Activated T-helper 1 cell treated with anti-CD3 and anti-CD28 coated beads, Interleukin-12 subunit alpha, Interleukin-12 subunit beta, Interleukin-2, Interleukin-4 antibody, amounts not matched to agents 30 ng/mL and 10 ng/mL and 1 ng/mL, durations not matched to agents 14 hours and 24 hours and 36 hours (primary cell): ENCODE measurements at regions of chr11 and their contacts with region 1.

Region 1: GRCh38 chr11:75689863-75690609 is 21.2 kb upstream of the MAP6 start:
- DNase-seq: no peak
- H3K4me3 Mint-ChIP-seq: no peak overlapping the region
- H3K27ac Mint-ChIP-seq: peak overlapping the region; percentile 9
- H3K4me1 Mint-ChIP-seq: peaks cover 16% of the 10 kb centered on the region
- H3K27me3 Mint-ChIP-seq: peaks cover 29% of the 10 kb centered on the region

Region 2: DNA sequence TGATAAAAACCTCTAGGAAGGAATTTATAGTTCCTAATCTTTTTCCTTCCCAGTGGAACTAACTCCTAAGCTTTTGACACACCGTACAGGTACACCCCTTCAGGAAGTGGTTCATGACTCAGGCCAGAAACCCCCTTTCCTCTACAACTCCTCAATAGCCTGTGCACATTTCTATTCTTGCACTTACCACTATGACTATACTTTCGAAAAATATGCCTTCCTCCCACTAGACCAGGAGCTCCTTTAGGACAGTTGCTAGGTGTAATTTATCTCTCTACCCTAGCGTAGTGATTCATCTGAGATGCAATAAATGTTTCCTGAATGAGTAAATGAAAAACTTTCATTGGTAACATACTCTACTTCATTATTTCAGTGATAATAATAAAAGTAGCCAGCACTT is 35.7 kb before region 1 on chr11:
- intact Hi-C with region 1: loop called (anchors 1 kb)
- DNase-seq: no peak
- H3K4me3 Mint-ChIP-seq: no peak overlapping the region
- H3K27ac Mint-ChIP-seq: no peak overlapping the region
- H3K4me1 Mint-ChIP-seq: peaks cover 15% of the 10 kb centered on the region
- H3K27me3 Mint-ChIP-seq: peaks cover 24% of the 10 kb centered on the region

Region 3: GRCh38 chr11:75673977-75674582 is 16.0 kb before region 1 on chr11:
- intact Hi-C with region 1: loop called (anchors 1 kb)
- DNase-seq: peak; percentile 47
- H3K4me3 Mint-ChIP-seq: no peak overlapping the region
- H3K27ac Mint-ChIP-seq: no peak overlapping the region
- H3K4me1 Mint-ChIP-seq: peaks cover 42% of the 10 kb centered on the region
- H3K27me3 Mint-ChIP-seq: peaks cover 33% of the 10 kb centered on the region

Region 4: DNA sequence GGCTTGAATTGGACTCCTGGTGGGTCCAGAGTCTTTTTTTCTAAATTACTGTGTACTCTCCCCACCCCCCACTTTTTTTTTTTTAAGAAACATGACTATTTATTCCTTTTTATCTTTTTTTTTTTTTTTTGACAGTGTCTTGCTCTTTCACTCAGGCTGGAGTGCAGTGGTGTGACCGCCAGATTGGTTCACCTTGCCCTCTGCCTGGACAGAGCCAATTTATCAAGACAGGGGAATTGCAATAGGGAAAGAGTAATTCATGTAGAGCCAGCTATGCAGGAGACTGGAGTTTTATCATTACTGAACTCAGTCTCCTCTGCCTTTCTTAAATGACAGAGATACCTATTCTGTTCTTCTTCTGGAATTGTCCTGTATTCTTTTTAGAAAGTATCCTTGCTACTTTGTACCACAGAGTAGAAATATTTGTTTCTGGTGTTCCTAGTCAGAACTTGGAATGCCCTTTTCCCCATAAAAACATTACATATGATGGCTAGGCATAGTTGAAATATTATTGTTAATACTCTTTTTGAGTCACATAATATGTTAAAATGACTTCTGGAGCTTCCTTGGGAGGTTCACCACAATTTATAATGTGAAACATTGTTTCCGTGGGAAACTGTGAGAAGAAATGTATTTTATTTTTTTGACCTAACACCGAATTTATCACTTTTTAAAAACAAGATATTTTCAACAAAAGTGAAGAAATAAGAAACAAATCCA is 220.6 kb after region 1 on chr11:
- intact Hi-C with region 1: no loop called
- DNase-seq: no peak
- H3K4me3 Mint-ChIP-seq: no peak overlapping the region
- H3K27ac Mint-ChIP-seq: no peak overlapping the region
- H3K4me1 Mint-ChIP-seq: peaks cover 31% of the 10 kb centered on the region
- H3K27me3 Mint-ChIP-seq: peaks cover 15% of the 10 kb centered on the region